KBM-7 (cell line): ENCODE measurements at regions of chr4 and their contacts with region 1.

Region 1: GRCh38 chr4:147160908-147161513 is 215.3 kb upstream of the TTC29 start:
- DNase-seq: peak; percentile 61

Region 2: DNA sequence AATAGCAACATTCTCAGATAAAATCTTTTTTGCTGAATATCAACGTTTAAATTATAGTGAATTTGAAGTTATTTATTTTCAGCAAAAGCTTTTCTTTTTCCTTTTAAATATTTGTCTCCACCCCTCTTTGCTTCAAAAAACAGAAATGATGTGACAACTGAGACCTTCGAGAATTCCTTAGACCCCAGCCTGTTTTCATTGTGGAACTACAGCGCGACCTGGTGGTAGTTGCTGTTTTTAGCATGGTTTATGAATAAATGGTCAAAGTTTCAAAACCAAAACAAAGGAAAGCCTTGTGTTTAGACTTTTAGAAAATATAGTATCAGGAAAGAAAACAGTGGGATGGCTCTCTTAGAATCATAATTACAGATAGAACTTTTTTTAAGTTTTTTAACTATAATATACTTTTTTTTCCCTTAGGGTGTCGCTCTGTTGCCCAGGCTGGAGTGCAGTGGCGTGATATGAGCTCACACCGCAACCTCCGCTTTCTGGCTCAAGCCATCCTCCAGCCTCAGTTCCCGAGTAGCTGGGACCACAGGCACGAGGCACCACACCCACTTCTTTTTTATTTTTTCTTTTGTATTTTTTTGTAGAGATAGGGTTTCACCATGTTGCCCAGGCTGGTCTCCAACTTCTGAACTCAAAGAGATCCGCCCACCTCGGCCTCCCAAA is 429.4 kb after region 1 on chr4:
- in situ Hi-C with region 1: loop called (anchors 25 kb)
- DNase-seq: peak; percentile 75